CD8-positive, alpha-beta memory T cell (primary cell): ENCODE measurements at regions of chr1 and their contacts with region 1.

Region 1: DNA sequence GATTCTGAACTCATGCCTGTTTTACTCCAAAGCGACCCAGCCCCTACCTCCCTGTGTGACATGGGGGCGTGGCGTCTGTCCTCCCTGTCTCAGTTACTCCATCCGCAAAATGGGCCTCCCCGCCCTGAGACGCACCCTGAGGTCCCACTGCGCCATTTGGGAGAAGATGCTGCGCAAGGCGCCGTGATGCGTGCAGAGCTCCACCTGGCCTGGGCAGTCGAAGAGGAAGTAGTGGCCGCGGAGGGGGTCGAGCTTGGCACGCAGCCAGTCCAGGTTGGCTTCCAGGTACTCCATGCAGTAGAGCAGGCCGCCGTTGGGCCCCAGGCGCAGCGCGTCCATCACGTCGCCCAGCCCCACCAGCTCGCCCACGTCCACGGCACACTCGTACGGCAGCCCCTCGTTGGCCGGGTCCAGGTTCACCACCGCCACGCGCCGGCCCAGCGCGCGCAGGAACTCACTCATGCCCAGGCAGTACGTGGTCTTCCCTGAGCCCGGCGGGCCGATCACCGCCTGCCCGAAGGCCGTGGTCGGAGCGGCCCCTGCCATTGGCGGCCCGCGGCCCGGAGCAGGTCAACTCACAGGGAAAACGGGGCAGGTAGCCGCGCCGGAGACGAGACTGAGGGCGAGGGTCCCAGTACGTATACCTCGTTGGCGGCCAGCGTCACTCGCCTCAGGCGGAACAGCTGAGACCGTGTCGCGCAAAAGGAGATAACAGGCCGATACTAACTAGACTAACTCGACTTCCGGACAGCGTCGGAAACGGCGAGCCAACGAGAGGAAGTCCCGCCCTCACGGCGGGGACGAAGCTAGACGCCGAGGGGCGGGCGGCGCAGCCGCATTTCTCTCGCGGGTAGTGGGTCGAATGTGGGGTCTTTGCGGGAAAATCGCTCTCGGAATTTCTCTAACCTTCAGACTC is at the start of gene GPN2:
- DNase-seq: peak; percentile 64 to 85 (median 72)
- H3K4me3 ChIP-seq: peak within 1 kb of the TSS; percentile 92
- H3K4me3 Mint-ChIP-seq: peak within 1 kb of the TSS; percentile 93 to 96 (median 94)
- H3K27ac ChIP-seq: peak within 1 kb of the TSS; percentile 91
- H3K27ac Mint-ChIP-seq: peak within 1 kb of the TSS; percentile 88 to 99 (median 96)
- H3K4me1 ChIP-seq: peaks cover 19% of the 10 kb centered on the region
- H3K4me1 Mint-ChIP-seq: peaks cover 32 to 48% (median 35%) of the 10 kb centered on the region in 3 donors
- H3K27me3 ChIP-seq: no peaks in the 10 kb centered on the region
- H3K27me3 Mint-ChIP-seq: no peaks in the 10 kb centered on the region
- total RNA-seq, gene GPN2: 60.2 to 69.9 TPM

Region 2: GRCh38 chr1:26864610-26865527 is 24.9 kb before region 1 on chr1:
- CTCF ChIA-PET with region 1: interaction called, 10 read pairs
- POLR2A ChIA-PET with region 1: interaction called, 16 read pairs
- DNase-seq: peak; percentile 91 to 95 (median 94)
- H3K4me3 ChIP-seq: peak overlapping the region; percentile 97
- H3K4me3 Mint-ChIP-seq: peak overlapping the region; percentile 88 to 97 (median 93)
- H3K27ac ChIP-seq: peak overlapping the region; percentile 83
- H3K27ac Mint-ChIP-seq: peak overlapping the region; percentile 73 to 98 (median 92)
- H3K4me1 ChIP-seq: peaks cover 11% of the 10 kb centered on the region
- H3K4me1 Mint-ChIP-seq: peaks cover 14 to 28% (median 27%) of the 10 kb centered on the region in 3 donors
- H3K27me3 ChIP-seq: no peaks in the 10 kb centered on the region
- H3K27me3 Mint-ChIP-seq: no peaks in the 10 kb centered on the region

Region 3: DNA sequence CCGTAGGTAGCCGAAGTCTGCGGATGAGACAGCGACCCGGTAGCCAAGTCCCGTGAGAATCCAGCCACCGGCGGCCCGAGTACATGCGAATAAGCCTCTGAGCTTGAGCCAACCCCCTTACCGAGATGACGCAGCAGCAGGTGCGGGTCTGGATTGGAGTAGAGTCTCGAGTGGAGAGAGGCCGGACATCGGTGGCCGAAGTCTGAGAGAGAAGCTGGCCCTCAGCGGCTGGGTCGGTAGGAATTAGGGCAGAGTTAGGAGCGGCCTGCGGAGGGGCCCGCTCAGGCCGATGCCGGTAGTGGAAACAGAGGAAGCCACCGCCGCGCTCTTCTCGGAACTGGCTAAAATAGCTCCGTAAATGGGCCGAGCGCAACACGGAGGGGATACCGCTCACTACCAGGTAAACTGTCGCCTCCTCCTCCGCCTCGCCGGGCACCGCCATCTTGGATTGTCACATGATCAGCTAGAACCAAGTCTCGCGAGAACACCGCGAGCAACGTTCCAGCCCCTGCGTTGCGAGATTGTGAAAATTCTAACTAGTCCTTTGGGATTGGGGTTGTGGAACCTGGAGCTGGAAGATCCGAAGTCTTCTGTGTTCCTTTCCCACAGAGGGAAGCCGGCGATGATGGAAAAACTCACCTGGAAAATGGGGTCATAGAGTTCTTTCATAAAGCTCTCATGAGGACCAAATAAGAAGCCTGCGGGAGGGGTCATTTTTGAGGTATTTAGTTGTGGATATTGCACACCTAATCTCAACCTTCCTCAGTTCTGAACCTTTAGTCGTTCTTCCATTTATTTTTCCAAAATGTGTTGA is 10.4 kb after region 1 on chr1 and contains the start of gene GPATCH3:
- CTCF ChIA-PET with region 1: interaction called, 13 read pairs
- POLR2A ChIA-PET with region 1: interaction called, 39 read pairs
- DNase-seq: peak; percentile 82 to 94 (median 85)
- H3K4me3 ChIP-seq: peak within 1 kb of the TSS; percentile 92
- H3K4me3 Mint-ChIP-seq: peak within 1 kb of the TSS; percentile 88 to 99 (median 93)
- H3K27ac ChIP-seq: peak within 1 kb of the TSS; percentile 87
- H3K27ac Mint-ChIP-seq: peak within 1 kb of the TSS; percentile 92 to 100 (median 98)
- H3K4me1 ChIP-seq: peaks cover 20% of the 10 kb centered on the region
- H3K4me1 Mint-ChIP-seq: peaks cover 27 to 48% (median 37%) of the 10 kb centered on the region in 3 donors
- H3K27me3 ChIP-seq: no peaks in the 10 kb centered on the region
- H3K27me3 Mint-ChIP-seq: no peaks in the 10 kb centered on the region
- total RNA-seq, gene GPATCH3: 20.0 to 21.3 TPM

Region 4: GRCh38 chr1:27049607-27050006 is 159.8 kb after region 1 on chr1:
- CTCF ChIA-PET with region 1: no interaction called
- POLR2A ChIA-PET with region 1: no interaction called
- DNase-seq: no peak
- H3K4me3 ChIP-seq: no peak overlapping the region
- H3K4me3 Mint-ChIP-seq: no peak overlapping the region
- H3K27ac ChIP-seq: no peak overlapping the region
- H3K27ac Mint-ChIP-seq: no peak overlapping the region
- H3K4me1 ChIP-seq: peaks cover 11% of the 10 kb centered on the region
- H3K4me1 Mint-ChIP-seq: peaks cover 14 to 17% (median 15%) of the 10 kb centered on the region in 3 donors
- H3K27me3 ChIP-seq: no peaks in the 10 kb centered on the region
- H3K27me3 Mint-ChIP-seq: no peaks in the 10 kb centered on the region